Posterior cingulate gyrus (tissue), 11 donors: ENCODE measurements at regions of chr13 and their contacts with region 1.

Region 1: GRCh38 chr13:68304286-68304893 is 1074.3 kb upstream of the PCDH9 start:
- DNase-seq: no peak

Region 2: GRCh38 chr13:67308004-67308772 is 996.2 kb before region 1 on chr13:
- intact Hi-C with region 1: no loop called
- DNase-seq: no peak

Region 3: DNA sequence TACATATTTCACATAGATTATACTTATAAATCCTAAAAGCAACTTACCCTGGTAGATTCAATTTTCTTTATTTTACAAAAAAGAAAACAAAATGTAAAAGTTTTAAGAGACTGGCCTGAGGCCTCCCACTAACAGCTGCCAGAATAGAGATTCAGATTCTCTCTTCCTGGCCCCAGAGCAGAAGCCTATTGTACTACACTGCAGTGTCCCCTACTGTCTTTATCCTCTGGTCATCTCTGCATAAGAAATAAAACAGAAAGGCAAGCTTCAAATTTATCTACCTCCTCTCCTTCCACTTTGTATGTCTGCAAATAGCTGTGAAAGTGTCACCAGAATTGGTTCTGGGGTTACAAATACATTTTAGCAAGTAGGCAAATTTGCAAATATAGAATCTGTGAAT is 70.1 kb before region 1 on chr13:
- intact Hi-C with region 1: no loop called
- DNase-seq: no peak

Region 4: DNA sequence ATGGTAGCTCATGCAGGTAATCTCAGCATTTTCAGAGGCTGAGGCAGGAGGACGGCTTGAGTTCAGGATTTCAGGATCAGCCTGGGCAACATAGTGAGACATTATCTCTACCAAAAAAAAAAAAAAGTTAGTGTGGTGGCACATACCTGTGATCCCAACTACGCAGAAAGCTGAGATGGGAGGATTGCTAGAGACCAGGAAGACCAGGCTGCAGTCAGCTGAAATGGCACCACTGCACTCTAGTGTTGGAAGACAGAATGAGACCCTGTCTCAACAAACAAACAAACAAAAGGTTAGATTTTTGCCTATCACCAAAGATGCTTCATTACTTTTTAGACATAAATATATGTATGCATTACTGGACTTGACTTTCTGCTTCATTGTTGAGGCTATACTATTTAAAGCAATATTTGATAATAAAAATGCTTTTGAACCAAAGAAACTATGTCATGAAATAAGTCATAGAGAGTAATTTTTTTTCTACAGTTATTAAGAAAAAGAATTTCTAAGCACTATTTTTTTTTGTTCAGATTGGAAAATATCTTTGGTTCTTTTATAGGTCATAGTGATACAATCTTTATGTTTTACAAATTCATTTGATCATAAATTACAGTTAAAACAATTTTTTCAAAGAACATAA is 623.1 kb after region 1 on chr13:
- intact Hi-C with region 1: loop called (anchors 10 kb)
- DNase-seq: peak in 5 of 10 donors; percentile 3 to 77 (median 9)